Dendritic cell treated with granulocyte-macrophage colony-stimulating factor and Interleukin-4, amounts not matched to agents 40 ng/mL and 50 ng/mL, for 4 days (primary cell): ENCODE measurements at regions of chr16 and their contacts with region 1.

Region 1: GRCh38 chr16:11819798-11820197 is 22.7 kb upstream of the ZC3H7A start:
- H3K4me3 Mint-ChIP-seq: no peak overlapping the region
- H3K27ac Mint-ChIP-seq: no peak overlapping the region
- H3K4me1 Mint-ChIP-seq: peaks cover 37% of the 10 kb centered on the region
- H3K27me3 Mint-ChIP-seq: no peaks in the 10 kb centered on the region

Region 2: GRCh38 chr16:11396241-11397048 is 423.4 kb before region 1 on chr16:
- intact Hi-C with region 1: loop called (anchors 10 kb)
- H3K4me3 Mint-ChIP-seq: no peak overlapping the region
- H3K27ac Mint-ChIP-seq: no peak overlapping the region
- H3K4me1 Mint-ChIP-seq: no peaks in the 10 kb centered on the region
- H3K27me3 Mint-ChIP-seq: peaks cover 29% of the 10 kb centered on the region